ENCODE measurements at regions of chr11 and their contacts with region 1.

Region 1: DNA sequence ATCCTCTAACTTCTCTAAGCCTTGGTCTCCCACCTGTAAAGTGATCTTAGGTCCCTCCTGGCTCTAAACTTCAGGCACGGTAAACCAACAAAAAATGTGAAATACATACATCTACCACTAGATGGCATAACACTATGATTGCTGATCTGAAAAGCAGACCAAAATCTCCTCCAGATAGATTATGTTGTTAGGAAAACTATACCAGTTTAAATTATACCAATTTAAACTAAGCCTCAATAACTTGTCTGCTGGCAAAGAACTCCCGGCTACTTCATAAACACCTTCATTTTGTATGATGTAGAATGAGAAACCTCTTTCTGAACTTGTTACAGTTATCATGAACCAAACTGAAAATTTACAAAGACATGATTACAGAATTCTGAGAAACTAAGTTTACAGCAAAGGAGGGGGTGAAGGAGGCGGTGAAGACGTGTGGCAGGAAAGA is 85.9 kb downstream of the SBF2 start:
- DNase-seq: peak in 1 of 2 experiments; percentile 58
- H3K4me3 ChIP-seq: no peak overlapping the region
- H3K4me3 Mint-ChIP-seq: no peak overlapping the region
- H3K27ac Mint-ChIP-seq: no peak overlapping the region
- H3K4me1 ChIP-seq: no peaks in the 10 kb centered on the region; the same call in 1 of the 2 replicates
- H3K4me1 Mint-ChIP-seq: peaks cover 7% of the 10 kb centered on the region
- H3K27me3 ChIP-seq: no peaks in the 10 kb centered on the region
- H3K27me3 Mint-ChIP-seq: no peaks in the 10 kb centered on the region
- CTCF ChIP-seq: peak; percentile 64 to 70

Region 2: GRCh38 chr11:9990221-9990975 is 217.8 kb before region 1 on chr11:
- CTCF ChIA-PET with region 1: interaction called, 3 read pairs
- POLR2A ChIA-PET with region 1: no interaction called
- intact Hi-C with region 1: loop called (anchors 5 kb)
- DNase-seq: peak in 1 of 2 experiments; percentile 17
- H3K4me3 ChIP-seq: no peak overlapping the region
- H3K4me3 Mint-ChIP-seq: no peak overlapping the region
- H3K27ac Mint-ChIP-seq: no peak overlapping the region
- H3K4me1 ChIP-seq: no peaks in the 10 kb centered on the region
- H3K4me1 Mint-ChIP-seq: no peaks in the 10 kb centered on the region
- H3K27me3 ChIP-seq: no peaks in the 10 kb centered on the region
- H3K27me3 Mint-ChIP-seq: no peaks in the 10 kb centered on the region
- CTCF ChIP-seq: peak in 1 of 2 experiments; percentile 43

Region 3: GRCh38 chr11:10181811-10182210 is 26.3 kb before region 1 on chr11:
- CTCF ChIA-PET with region 1: no interaction called
- POLR2A ChIA-PET with region 1: no interaction called
- intact Hi-C with region 1: loop called (anchors 2 kb)
- DNase-seq: no peak
- H3K4me3 ChIP-seq: no peak overlapping the region
- H3K4me3 Mint-ChIP-seq: no peak overlapping the region
- H3K27ac Mint-ChIP-seq: no peak overlapping the region
- H3K4me1 ChIP-seq: no peaks in the 10 kb centered on the region; the same call in 1 of the 2 replicates
- H3K4me1 Mint-ChIP-seq: no peaks in the 10 kb centered on the region
- H3K27me3 ChIP-seq: no peaks in the 10 kb centered on the region
- H3K27me3 Mint-ChIP-seq: no peaks in the 10 kb centered on the region
- CTCF ChIP-seq: peak; percentile 14 to 22

Measured in Caco-2 (cell line).